Transverse colon (tissue), 4 donors: ENCODE measurements at regions of chr6 and their contacts with region 1.

Region 1: DNA sequence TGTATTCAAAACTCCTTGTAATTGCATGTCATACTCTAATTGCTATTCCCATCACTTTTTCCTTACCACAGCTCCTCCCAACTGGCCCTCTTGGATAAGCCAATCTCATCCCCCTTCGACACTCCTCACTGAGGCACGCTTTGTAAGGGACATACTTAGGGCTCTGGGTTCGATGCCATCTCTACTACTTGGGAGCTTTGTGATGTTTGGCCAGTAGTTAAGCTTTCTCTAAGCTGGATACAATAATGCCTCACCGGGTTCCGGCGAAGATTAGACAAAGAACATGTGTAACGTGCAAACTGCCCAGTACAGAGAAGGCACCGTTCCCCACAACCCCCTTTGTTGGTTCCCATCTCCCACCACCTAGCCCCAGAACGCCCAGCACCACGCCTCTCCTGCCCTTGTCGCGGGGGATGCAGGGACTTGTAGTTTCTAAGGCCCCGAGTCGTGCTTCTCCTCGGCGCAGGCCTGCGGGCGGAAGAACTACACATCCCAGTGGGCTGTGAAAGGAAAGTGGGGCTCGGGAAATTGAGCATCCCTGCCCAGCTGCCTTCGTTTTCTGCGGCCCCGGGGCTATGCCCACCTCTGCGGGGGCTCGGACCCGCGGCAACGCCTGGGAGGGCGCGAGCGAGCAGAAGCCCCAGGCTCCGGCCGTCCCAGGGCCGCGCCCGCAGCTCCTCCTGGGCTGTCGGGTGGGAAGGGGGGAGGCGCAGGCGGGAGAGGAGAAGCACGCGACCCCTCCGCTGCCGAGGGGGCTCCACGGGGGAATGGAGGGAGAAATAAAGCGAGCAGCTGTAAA is 1.1 kb upstream of the ZDHHC14 start:
- DNase-seq: peak; percentile 93
- H3K4me3 ChIP-seq: peak overlapping the region; percentile 61 to 98 (median 92)
- H3K27ac ChIP-seq: peak overlapping the region; percentile 93 to 99 (median 96)
- H3K4me1 ChIP-seq: peaks cover 0 to 27% (median 12%) of the 10 kb centered on the region in 4 donors
- H3K27me3 ChIP-seq: no peaks in the 10 kb centered on the region
- CTCF ChIP-seq: no peak
- EP300 ChIP-seq: no peak
- POLR2A ChIP-seq: peak; percentile 20

Region 2: DNA sequence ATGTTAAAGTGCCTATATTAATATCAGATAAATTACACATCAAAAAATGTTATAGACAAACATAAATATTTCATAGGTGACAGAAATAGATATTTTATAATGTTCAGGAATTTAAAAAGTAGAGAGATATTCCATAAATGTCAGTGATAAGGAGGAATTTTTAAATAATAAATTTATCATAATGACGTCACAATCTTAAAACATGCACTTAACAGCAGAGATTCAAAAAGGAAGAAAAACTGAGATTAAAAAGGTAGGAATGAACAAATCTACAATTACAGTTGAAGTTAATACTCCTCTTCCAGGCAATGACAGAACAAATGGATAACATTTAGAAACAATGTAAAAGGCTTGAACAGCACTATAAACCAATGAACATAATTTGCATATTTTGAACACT is 1578.8 kb before region 1 on chr6:
- in situ Hi-C with region 1: no loop called
- intact Hi-C with region 1: no loop called
- DNase-seq: no peak
- H3K4me3 ChIP-seq: no peak overlapping the region
- H3K27ac ChIP-seq: no peak overlapping the region
- H3K4me1 ChIP-seq: no peaks in the 10 kb centered on the region
- H3K27me3 ChIP-seq: no peaks in the 10 kb centered on the region
- CTCF ChIP-seq: no peak
- EP300 ChIP-seq: no peak
- POLR2A ChIP-seq: no peak

Region 3: GRCh38 chr6:157323255-157323965 is 56.4 kb before region 1 on chr6 and contains the start of gene TMEM242:
- in situ Hi-C with region 1: loop called in 1 of 4 experiments (anchors 10 kb)
- intact Hi-C with region 1: loop called (anchors 5 kb)
- DNase-seq: peak; percentile 94
- H3K4me3 ChIP-seq: peak within 1 kb of the TSS; percentile 60 to 79 (median 72)
- H3K27ac ChIP-seq: peak within 1 kb of the TSS; percentile 90 to 97 (median 94)
- H3K4me1 ChIP-seq: peaks cover 5 to 18% (median 11%) of the 10 kb centered on the region in 4 donors
- H3K27me3 ChIP-seq: peaks cover 2% of the 10 kb centered on the region
- CTCF ChIP-seq: peak in 3 of 5 experiments; percentile 21 to 59 (median 45)
- EP300 ChIP-seq: no peak
- POLR2A ChIP-seq: peak; percentile 96
- total RNA-seq, gene TMEM242: 0.20 to 8.4 (median 5.8) TPM

Region 4: DNA sequence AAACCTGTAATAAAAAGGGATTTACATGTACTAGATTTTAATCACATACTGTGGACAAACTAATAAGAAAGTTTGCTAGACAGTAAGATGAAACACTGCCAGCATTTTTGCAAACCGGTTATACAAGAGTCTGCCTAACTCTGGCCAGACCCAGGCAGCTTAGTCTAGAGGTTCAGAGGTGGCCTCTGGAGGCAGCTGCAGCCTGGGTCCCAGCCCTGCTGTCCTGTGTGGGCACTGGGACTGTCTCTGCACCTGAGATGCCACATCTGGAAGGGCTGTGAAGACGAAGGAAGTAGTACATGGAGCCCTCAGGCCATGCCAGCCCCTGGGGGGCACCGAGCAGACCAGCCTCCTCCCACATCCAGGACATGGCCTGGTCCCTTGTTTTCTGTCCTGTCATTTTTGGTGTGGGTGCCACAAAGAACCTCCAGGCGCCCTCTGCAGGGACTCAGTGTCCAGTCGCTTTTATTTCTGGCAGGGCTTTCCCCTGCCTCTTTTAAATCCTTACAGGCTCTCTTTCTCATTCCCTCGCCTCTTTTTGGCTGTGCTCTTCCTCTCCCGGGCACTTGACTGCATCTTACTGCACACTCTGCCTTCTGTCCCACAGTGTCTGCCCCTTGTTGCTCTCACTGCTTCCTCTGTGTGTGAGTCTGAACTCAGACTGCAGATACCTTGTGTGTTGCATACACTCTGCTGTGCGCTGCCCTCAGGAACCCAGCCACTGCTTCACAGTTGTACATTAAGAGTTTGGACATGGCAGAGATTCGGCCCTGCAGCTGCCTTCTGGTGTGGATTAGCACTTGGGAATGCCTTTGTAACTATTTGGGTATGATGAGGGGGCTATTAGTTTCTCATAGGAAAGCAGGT is 217.8 kb after region 1 on chr6:
- in situ Hi-C with region 1: loop called in 1 of 4 experiments (anchors 25 kb)
- intact Hi-C with region 1: no loop called
- DNase-seq: peak; percentile 61
- H3K4me3 ChIP-seq: no peak overlapping the region
- H3K27ac ChIP-seq: peak overlapping the region; percentile 57 to 66 (median 60)
- H3K4me1 ChIP-seq: peaks cover 2 to 15% (median 9%) of the 10 kb centered on the region in 4 donors
- H3K27me3 ChIP-seq: no peaks in the 10 kb centered on the region
- CTCF ChIP-seq: peak; percentile 35 to 61 (median 51)
- EP300 ChIP-seq: no peak
- POLR2A ChIP-seq: no peak

Region 5: DNA sequence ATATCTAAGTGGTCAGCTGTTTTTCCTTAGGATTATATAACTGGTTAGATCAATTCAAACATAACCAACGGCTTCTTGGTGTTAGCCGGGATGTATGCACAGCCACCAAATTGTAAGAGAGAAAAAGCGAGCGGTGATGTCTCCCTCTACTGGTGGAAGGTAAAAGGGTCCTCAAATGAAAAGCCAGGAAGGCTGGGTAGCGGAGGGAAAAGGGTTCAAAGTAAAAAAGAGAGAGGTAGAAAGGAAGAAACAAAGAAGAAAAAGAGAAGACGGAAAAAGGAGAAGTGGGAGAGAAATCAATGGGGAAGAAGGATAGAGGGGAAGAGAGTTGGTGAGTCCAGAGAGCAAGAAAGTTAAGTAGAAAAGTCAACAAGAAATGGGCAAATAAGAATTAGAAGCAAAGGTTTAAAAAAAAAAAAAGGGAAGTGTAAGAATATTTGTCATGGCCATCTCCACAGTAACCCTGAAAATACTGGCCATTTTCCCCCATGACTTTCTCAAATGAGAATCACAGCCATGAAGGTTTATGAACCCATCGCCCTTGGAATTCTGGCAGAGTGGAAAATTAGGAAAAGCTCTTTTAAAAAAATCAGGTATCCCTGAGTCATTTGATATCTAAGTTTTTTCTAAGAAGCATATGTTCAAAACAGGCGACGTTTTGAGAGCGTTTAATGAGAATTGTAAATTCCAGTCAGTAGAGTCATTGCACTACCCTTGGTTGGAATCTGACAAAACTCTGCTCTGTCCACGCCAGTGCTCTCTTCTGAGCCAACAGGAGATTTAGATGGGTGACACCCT is 287.6 kb after region 1 on chr6:
- in situ Hi-C with region 1: no loop called
- intact Hi-C with region 1: no loop called
- DNase-seq: peak; percentile 58
- H3K4me3 ChIP-seq: no peak overlapping the region
- H3K27ac ChIP-seq: no peak overlapping the region
- H3K4me1 ChIP-seq: peaks cover 4 to 37% (median 15%) of the 10 kb centered on the region in 4 donors
- H3K27me3 ChIP-seq: no peaks in the 10 kb centered on the region
- CTCF ChIP-seq: peak; percentile 85 to 94 (median 85)
- EP300 ChIP-seq: no peak
- POLR2A ChIP-seq: no peak